Panc1 (cell line): ENCODE measurements at regions of chr5 and their contacts with region 1.

Region 1: DNA sequence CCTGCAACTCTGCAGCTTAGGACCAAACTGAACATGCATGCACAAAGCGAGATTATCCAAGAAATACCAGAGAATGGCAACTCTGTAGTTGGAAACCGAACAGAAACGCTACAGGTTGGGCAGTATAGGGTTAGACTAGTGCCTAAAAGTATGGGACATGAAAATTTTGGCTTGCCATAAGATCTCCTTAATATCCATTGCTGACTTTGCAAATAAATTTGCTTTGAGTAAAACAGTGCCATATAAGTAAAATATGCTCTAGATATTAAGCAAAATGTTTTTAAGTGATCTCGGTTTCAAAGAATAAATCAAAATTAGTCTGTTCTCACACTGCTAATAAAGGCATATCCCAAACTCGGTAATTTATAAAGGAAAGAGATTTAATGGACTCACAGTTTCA is 456.0 kb downstream of the PRDM9 start:
- DNase-seq: no peak
- ATAC-seq: no peak
- H3K4me3 ChIP-seq: no peak overlapping the region
- H3K27ac ChIP-seq: no peak overlapping the region
- H3K4me1 ChIP-seq: no peaks in the 10 kb centered on the region
- H3K27me3 ChIP-seq: no peaks in the 10 kb centered on the region
- CTCF ChIP-seq: no peak

Region 2: DNA sequence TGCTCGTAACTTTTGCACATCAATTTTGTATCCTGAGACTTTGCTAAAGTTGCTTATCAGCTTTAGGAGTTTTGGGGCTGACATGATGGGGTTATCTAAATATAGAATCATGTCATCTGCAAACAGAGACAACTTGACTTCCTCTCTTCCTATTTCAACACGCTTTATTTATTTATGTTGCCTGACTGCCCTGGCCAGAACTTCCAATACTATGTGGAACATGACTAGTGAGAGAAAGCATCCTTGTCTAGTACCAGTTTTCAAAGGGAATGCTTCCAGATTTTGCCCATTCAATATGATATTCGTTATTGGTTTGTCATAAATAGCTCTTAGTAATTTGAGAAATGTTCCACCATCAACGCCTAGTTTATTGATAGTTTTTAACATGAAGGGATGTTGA is 1044.9 kb before region 1 on chr5:
- CTCF ChIA-PET with region 1: no interaction called
- POLR2A ChIA-PET with region 1: no interaction called
- in situ Hi-C with region 1: no loop called
- intact Hi-C with region 1: loop called (anchors 5 kb)
- DNase-seq: no peak
- ATAC-seq: no peak
- H3K4me3 ChIP-seq: no peak overlapping the region
- H3K27ac ChIP-seq: no peak overlapping the region
- H3K4me1 ChIP-seq: no peaks in the 10 kb centered on the region
- H3K27me3 ChIP-seq: no peaks in the 10 kb centered on the region
- CTCF ChIP-seq: no peak